ENCODE measurements at regions of chr11 and their contacts with region 1.

Region 1: DNA sequence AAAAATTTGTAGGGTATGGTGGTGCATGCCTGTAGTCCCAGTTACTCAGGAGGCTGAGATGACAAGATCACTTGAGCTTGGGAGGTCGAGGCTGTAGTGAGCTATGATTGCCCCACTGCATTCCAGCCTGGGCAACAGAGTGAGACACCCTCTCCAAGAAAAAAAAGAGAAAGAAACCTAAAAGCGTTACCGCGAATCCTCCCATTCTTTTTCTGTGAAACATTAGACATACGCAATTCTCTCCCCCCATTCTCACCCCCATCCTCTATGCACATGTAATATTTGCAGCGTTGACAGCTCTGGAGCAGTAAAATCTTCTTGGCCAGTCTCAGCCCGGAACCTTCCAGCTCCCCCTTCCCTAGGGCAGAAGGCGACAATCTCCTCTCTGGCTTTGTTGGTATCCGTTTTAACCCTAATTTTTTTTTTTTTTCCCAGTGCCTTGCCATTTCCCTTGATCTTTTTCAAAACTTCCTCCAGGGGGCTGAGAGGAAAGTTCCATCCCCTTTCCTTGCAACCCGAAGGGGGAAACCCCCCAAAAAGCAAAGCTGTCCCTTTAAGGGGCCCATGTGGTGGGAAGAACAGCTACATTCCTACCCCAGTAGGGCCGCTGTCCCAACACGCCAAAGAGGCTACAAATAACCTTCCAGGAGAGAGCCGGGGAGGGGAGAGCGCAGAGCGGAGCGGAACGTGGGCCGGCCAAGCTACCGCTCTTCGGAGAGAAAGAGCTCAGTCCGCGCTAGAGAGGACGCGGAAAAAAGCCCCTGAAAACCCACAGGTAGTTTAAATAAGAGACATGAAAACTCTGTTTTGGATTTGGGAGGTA is 1.9 kb downstream of the LRP4 start:
- DNase-seq: no peak
- H3K4me3 ChIP-seq: peak overlapping the region; percentile 64
- CTCF ChIP-seq: peak; percentile 5

Region 2: DNA sequence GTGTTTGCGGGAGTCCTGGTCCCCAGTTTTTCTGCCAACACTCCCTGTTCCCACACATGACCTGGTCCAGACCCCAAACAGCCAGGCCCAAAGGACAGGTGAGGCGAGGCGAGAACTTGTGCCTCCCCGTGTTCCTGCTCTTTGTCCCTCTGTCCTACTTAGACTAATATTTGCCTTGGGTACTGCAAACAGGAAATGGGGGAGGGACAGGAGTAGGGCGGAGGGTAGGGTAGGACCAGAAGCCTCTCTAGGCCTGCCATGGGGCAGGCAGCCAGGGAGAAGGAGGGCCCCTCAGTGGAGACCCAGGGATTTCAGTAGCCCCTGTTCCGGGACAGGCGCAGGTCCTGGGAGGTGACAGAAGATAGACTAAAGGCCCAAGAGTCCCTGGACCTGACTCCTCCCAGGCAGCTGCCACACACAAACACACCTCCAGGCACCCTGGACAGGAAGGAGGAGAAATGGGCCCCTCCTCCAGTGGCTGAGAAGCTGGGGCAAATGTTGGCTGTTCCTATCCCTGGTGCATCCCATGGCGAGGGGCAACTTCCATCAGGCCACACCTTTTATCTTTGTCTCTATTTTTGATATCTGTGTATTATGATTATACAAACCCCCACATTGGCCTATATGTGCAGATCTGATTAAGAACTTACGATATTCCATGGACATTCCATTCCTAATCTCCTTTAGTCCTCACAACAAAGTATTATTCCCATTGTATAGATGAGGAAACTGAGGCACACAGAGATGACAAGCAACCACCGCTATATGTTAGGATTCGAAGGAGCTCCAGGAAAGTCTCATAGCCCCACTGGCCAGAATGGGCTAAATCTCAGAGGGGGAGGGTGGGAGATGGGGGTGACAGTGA is 198.1 kb before region 1 on chr11:
- CTCF ChIA-PET with region 1: no interaction called
- POLR2A ChIA-PET with region 1: no interaction called
- DNase-seq: no peak
- H3K4me3 ChIP-seq: no peak overlapping the region
- CTCF ChIP-seq: no peak

Region 3: DNA sequence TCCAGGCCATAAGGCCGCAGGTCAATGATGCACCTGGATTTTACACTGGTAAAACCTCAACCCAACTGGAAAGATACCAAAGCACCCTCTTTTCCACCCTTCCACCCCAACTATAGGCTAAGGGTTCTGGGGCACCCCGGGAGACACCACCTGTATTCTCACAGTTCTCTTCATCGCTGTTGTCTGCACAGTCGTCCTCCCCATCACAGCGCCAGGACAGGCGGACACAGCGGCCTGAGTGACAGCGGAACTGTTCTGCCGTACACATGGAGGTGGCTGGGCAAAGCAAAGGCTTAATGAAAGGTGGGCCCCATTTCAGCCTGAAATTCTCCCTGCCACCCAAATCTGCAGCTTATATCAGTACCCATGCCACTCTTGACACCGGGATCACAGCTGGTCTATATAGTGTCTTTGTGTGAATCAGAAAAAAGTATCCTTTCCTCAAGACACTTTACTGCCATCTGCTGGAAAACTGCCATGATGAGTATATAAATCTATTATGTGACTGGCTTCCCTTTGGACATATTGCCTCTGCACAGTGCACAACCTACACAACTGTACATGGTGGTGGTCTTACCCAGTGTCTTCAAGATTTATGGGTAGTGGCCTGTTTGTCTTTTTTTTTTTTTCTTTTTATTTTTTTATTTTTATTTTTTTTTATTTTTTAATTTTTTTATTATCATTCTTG is 19.6 kb before region 1 on chr11:
- CTCF ChIA-PET with region 1: interaction called, 22 read pairs
- POLR2A ChIA-PET with region 1: no interaction called
- DNase-seq: no peak
- H3K4me3 ChIP-seq: no peak overlapping the region
- CTCF ChIP-seq: no peak

Region 4: GRCh38 chr11:46936138-46937110 is 19.9 kb after region 1 on chr11 and contains the start of gene CSTPP1:
- CTCF ChIA-PET with region 1: interaction called, 16 read pairs
- POLR2A ChIA-PET with region 1: interaction called, 5 read pairs
- DNase-seq: peak; percentile 38
- H3K4me3 ChIP-seq: peak within 1 kb of the TSS; percentile 85
- CTCF ChIP-seq: no peak

Region 5: GRCh38 chr11:47161134-47161854 is 244.8 kb after region 1 on chr11:
- CTCF ChIA-PET with region 1: interaction called, 115 read pairs
- POLR2A ChIA-PET with region 1: interaction called, 3 read pairs
- DNase-seq: no peak
- H3K4me3 ChIP-seq: no peak overlapping the region
- CTCF ChIP-seq: peak; percentile 85

Region 6: GRCh38 chr11:47616726-47617416 is 700.4 kb after region 1 on chr11:
- CTCF ChIA-PET with region 1: no interaction called
- POLR2A ChIA-PET with region 1: no interaction called
- DNase-seq: peak; percentile 34
- H3K4me3 ChIP-seq: no peak overlapping the region
- CTCF ChIP-seq: peak; percentile 83

Measured in AG04449 (cell line).